Colonic mucosa (tissue), 4 donors: ENCODE measurements at regions of chr2 and their contacts with region 1.

Region 1: GRCh38 chr2:189669913-189670312 is 4.6 kb upstream of the ANKAR start:
- DNase-seq: no peak
- H3K4me3 ChIP-seq: no peak overlapping the region
- H3K27ac ChIP-seq: no peak overlapping the region
- H3K4me1 ChIP-seq: no peaks in the 10 kb centered on the region
- H3K27me3 ChIP-seq: no peaks in the 10 kb centered on the region
- CTCF ChIP-seq: no peak

Region 2: GRCh38 chr2:188978291-188979081 is 691.4 kb before region 1 on chr2:
- intact Hi-C with region 1: no loop called
- DNase-seq: no peak
- H3K4me3 ChIP-seq: peak overlapping the region; percentile 3
- H3K27ac ChIP-seq: peak overlapping the region; percentile 35
- H3K4me1 ChIP-seq: no peaks in the 10 kb centered on the region
- H3K27me3 ChIP-seq: no peaks in the 10 kb centered on the region
- CTCF ChIP-seq: no peak

Region 3: DNA sequence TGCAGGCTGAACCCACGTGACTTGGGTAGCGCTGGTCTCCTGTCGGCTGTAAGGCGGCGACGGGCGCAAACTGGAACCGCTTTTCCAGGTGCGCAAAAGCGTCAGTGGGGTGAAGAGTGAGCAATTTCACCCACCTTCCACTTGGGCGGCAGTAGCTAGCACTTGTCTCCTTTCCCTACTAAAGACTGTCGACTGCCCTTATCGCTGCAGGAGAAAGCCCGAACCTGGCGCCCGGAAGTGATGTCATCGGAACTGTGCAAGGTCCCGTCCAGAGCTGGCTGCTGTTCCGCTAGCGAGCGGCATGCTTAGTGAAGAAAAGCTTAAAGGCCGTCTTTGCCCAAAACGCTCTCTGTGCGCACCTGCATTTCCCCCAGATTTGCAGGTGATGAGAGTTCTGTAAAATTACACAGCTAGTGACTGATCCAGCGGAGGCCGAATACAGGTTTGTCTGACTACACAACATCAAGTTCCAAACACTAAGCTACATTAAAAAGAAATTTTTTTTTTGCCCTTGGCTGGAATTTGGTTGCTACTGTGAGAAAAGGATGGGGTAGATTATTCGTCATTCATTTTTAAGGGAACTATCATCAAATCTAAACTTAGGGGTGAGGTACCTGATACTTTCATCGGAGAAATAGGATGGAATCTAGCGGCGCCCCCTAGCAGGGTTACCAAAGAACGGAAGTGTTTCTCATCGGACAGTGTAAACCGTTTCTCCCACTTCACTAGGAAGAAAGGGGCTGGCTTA is 92.8 kb after region 1 on chr2 and contains the start of gene OSGEPL1:
- intact Hi-C with region 1: loop called (anchors 5 kb)
- DNase-seq: peak; percentile 94
- H3K4me3 ChIP-seq: peak within 1 kb of the TSS; percentile 56
- H3K27ac ChIP-seq: peak within 1 kb of the TSS; percentile 77
- H3K4me1 ChIP-seq: no peaks in the 10 kb centered on the region
- H3K27me3 ChIP-seq: no peaks in the 10 kb centered on the region
- CTCF ChIP-seq: no peak
- total RNA-seq, gene OSGEPL1: 2.1 to 6.5 TPM